ENCODE measurements at regions of chr5 and their contacts with region 1.

Region 1: DNA sequence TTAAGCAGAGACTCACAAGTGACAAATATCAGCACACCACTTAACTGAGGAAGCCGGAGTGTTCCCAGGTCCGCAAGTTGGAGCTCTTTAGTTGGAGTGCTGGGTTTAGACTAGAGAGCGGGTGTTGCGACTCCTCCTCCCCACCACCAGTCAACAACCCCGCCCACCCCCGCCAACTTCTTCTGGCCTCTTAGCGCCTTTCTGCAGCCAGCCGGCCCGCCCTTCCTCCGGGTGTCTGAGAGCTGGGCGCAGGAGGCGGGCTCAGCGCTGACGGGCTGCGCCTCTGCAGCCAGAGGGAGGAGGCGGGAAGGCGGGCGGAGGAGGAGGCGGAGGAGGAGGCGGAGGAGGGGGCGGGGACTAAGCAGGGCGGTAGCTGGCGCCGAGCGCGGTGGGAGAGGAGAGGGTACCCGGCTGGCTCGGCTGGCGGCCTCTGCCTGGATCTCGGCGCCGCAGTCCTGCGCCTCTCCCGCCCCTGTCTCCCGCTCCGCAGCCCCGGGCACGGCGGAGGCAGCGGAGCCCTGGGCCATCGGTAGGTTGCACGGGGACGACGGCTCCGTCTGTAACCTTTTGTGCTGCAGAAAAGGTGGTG is at the start of gene MACIR:
- DNase-seq: peak; percentile 98
- H3K4me3 Mint-ChIP-seq: peak within 1 kb of the TSS; percentile 88
- H3K27ac Mint-ChIP-seq: peak within 1 kb of the TSS; percentile 9
- H3K4me1 Mint-ChIP-seq: peaks cover 31% of the 10 kb centered on the region
- H3K27me3 Mint-ChIP-seq: no peaks in the 10 kb centered on the region
- CTCF ChIP-seq: no peak
- total RNA-seq, gene MACIR: 6.6 and 8.9 TPM in 2 replicates

Region 2: DNA sequence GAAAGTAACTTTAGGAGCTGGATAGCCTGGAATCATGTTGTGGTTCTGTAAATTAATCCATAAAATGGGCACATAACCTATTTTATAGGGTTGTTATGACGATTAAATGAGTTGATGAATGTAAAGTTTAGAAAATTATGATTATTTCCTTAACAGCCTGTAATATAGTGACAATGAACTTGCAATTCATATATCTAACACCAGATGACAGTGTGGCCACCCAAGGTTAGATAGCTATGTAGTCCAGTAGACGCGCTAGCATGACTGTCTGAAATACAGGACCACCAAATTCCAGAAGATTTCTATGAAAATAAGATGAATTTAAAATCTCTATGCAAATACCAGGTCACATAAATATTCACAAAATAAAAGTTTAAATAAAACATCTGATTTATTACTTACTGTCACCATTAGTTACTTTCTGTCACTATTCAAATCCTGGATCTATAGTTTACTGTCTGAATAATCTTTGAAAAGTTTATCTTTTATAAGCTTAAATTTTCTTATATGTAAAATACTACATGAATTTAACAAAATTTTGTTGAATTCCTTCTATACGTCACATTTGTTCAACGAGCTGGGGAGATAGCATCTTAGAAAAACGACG is 26.0 kb before region 1 on chr5:
- CTCF ChIA-PET with region 1: interaction called, 13 read pairs
- POLR2A ChIA-PET with region 1: interaction called, 5 read pairs
- intact Hi-C with region 1: no loop called
- DNase-seq: peak; percentile 50
- H3K4me3 Mint-ChIP-seq: no peak overlapping the region
- H3K27ac Mint-ChIP-seq: no peak overlapping the region
- H3K4me1 Mint-ChIP-seq: peaks cover 5% of the 10 kb centered on the region
- H3K27me3 Mint-ChIP-seq: peaks cover 2% of the 10 kb centered on the region
- CTCF ChIP-seq: peak; percentile 79

Region 3: GRCh38 chr5:103271570-103272289 is 13.3 kb after region 1 on chr5:
- CTCF ChIA-PET with region 1: interaction called, 7 read pairs
- POLR2A ChIA-PET with region 1: interaction called, 43 read pairs
- intact Hi-C with region 1: no loop called
- DNase-seq: peak; percentile 50
- H3K4me3 Mint-ChIP-seq: no peak overlapping the region
- H3K27ac Mint-ChIP-seq: no peak overlapping the region
- H3K4me1 Mint-ChIP-seq: peaks cover 13% of the 10 kb centered on the region
- H3K27me3 Mint-ChIP-seq: no peaks in the 10 kb centered on the region
- CTCF ChIP-seq: no peak

Region 4: GRCh38 chr5:103464835-103465484 is 206.5 kb after region 1 on chr5:
- CTCF ChIA-PET with region 1: interaction called, 3 read pairs
- POLR2A ChIA-PET with region 1: interaction called, 10 read pairs
- intact Hi-C with region 1: no loop called
- DNase-seq: no peak
- H3K4me3 Mint-ChIP-seq: no peak overlapping the region
- H3K27ac Mint-ChIP-seq: no peak overlapping the region
- H3K4me1 Mint-ChIP-seq: peaks cover 5% of the 10 kb centered on the region
- H3K27me3 Mint-ChIP-seq: no peaks in the 10 kb centered on the region
- CTCF ChIP-seq: no peak

Region 5: GRCh38 chr5:103981592-103981991 is 723.1 kb after region 1 on chr5:
- CTCF ChIA-PET with region 1: no interaction called
- POLR2A ChIA-PET with region 1: no interaction called
- intact Hi-C with region 1: no loop called
- DNase-seq: no peak
- H3K4me3 Mint-ChIP-seq: no peak overlapping the region
- H3K27ac Mint-ChIP-seq: no peak overlapping the region
- H3K4me1 Mint-ChIP-seq: no peaks in the 10 kb centered on the region
- H3K27me3 Mint-ChIP-seq: no peaks in the 10 kb centered on the region
- CTCF ChIP-seq: no peak

Measured in MCF 10A (cell line).